ENCODE measurements at regions of chr22 and their contacts with region 1.

Region 1: GRCh38 chr22:30289134-30289979 is at the start of gene CASTOR1:
- DNase-seq: peak; percentile 78 to 97 (median 84)
- ATAC-seq: peak; percentile 89
- H3K4me3 ChIP-seq: peak within 1 kb of the TSS; percentile 80
- H3K4me3 Mint-ChIP-seq: peak within 1 kb of the TSS; percentile 87 to 93 (median 90)
- H3K27ac ChIP-seq: peak within 1 kb of the TSS; percentile 75
- H3K27ac Mint-ChIP-seq: peak within 1 kb of the TSS; percentile 85 to 96 (median 92)
- H3K4me1 ChIP-seq: peaks cover 25 to 27% of the 10 kb centered on the region in 2 donors
- H3K4me1 Mint-ChIP-seq: peaks cover 12 to 55% (median 39%) of the 10 kb centered on the region in 7 donors
- H3K27me3 ChIP-seq: no peaks in the 10 kb centered on the region
- H3K27me3 Mint-ChIP-seq: no peaks in the 10 kb centered on the region
- total RNA-seq, gene CASTOR1: 12.4 to 21.3 (median 17.9) TPM

Region 2: DNA sequence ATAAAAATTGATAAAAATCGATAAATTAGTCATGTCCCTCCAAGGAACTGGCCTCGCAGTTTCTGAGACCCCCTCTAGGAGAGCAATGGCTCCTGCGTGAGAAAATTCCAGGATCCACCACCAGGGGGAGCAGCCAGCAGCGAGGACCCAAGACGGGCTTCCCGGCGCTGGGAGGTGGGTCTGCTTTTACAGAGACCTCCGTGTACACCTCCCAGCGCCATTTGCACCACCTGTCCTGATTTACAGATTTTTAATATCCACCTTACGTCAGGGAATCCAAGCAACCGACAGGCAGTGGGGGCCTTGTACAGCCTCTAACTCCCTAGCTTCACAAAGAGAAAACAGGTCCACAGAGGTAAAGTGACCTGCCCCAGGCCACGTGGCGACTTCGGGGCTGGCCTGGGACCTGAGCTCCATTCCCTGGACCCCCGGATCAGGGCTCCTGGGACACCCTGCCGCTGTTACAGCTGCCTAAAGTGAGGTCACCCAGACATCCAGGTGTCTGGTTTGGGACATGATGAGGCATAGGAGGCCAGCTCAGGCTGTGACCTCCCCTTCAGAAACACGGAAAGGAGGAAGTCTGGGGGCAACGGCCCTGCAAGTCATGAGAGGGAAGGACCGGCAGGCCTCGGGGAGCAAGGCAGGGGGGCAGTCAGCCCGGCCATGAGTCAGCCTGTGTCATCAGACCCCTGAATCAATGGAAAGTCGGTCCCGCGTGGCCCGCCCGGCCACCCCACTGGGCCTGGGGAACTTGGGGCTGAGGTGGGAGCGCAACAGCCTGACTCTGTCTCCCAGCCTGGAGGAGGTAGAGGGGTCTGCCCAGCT is 26.2 kb before region 1 on chr22:
- CTCF ChIA-PET with region 1: interaction called, 85 read pairs
- POLR2A ChIA-PET with region 1: interaction called, 18 read pairs
- intact Hi-C with region 1: loop called (anchors 1 kb)
- DNase-seq: peak; percentile 58 to 87 (median 70)
- ATAC-seq: peak; percentile 28
- H3K4me3 ChIP-seq: no peak overlapping the region
- H3K4me3 Mint-ChIP-seq: peak overlapping the region; percentile 32 to 94 (median 48)
- H3K27ac ChIP-seq: no peak overlapping the region
- H3K27ac Mint-ChIP-seq: peak overlapping the region in 8 of 9 donors; percentile 7 to 87 (median 68)
- H3K4me1 ChIP-seq: peaks cover 27 to 38% of the 10 kb centered on the region in 2 donors
- H3K4me1 Mint-ChIP-seq: peaks cover 21 to 57% (median 39%) of the 10 kb centered on the region in 7 donors
- H3K27me3 ChIP-seq: no peaks in the 10 kb centered on the region
- H3K27me3 Mint-ChIP-seq: no peaks in the 10 kb centered on the region

Region 3: DNA sequence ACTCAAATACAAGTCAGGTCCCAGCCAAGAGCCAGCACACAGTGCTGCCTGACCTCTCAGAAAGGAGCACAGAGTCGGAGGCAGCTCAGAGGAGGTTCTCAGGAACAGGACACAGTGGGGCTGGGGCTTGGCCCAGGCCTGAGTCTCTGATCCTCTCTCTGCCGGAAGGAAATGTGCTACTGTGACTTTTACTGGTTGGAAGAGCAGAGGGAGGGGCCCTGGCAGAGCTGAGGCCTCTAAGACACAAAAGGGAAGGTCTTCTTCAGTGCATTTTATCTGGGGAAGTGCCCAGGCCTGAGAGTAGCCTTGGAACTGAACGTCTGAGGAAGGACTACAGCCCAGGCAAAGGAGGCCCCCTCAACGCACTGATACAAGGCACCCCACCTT is 16.2 kb after region 1 on chr22:
- CTCF ChIA-PET with region 1: interaction called, 74 read pairs
- POLR2A ChIA-PET with region 1: interaction called, 1,265 read pairs
- intact Hi-C with region 1: loop called (anchors 1 kb)
- DNase-seq: peak in 8 of 9 donors; percentile 56 to 75 (median 68)
- ATAC-seq: peak; percentile 67
- H3K4me3 ChIP-seq: peak overlapping the region; percentile 51
- H3K4me3 Mint-ChIP-seq: peak overlapping the region; percentile 69 to 97 (median 84)
- H3K27ac ChIP-seq: peak overlapping the region; percentile 75
- H3K27ac Mint-ChIP-seq: peak overlapping the region; percentile 87 to 99 (median 97)
- H3K4me1 ChIP-seq: peaks cover 96 to 98% of the 10 kb centered on the region in 2 donors
- H3K4me1 Mint-ChIP-seq: peaks cover 82 to 100% (median 93%) of the 10 kb centered on the region in 7 donors
- H3K27me3 ChIP-seq: no peaks in the 10 kb centered on the region
- H3K27me3 Mint-ChIP-seq: no peaks in the 10 kb centered on the region

Region 4: DNA sequence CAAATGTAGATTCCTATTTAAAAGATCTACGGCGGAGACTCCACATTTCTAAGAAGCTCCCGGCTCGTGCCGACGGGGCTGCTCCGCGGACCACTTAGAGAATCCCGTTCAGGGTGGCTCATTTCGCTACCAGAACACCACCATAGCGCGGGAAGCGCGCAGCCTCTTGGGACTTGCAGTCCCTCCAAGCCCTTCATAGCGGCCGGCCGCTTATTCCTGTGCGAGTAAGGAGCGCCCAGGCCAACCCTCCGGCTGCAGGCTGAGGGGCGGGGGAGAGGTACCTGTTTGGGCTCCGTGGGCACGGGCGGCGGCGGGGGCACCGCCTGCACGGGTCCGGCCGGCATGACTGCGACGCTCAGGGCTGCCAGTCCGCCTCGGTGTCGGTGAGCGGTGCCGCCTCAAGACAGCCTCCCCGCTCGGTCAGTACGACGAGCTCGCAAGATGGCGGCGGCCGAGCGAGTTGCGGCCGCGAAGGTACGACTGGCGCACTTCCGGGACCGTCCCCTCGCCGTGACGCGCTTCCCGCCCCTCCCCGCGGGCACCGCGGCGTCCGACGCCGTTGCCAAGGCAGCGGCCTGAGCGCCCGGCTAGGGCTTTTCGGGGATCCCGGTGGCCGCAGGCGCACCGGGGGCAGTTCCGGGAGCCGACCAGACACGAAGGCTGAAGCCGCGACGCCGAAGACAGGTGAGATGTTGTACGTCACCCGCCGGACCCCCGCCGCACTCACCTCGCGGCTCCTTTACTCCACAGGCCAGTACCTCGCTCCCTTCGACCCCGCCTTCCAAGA is 67.3 kb after region 1 on chr22 and contains the starts of genes CCDC157 and SF3A1:
- CTCF ChIA-PET with region 1: interaction called, 18 read pairs
- POLR2A ChIA-PET with region 1: interaction called, 87 read pairs
- intact Hi-C with region 1: loop called (anchors 1 kb)
- DNase-seq: peak; percentile 78 to 90 (median 86)
- ATAC-seq: peak; percentile 94
- H3K4me3 ChIP-seq: peak within 1 kb of the TSS; percentile 94
- H3K4me3 Mint-ChIP-seq: peak within 1 kb of the TSS; percentile 92 to 99 (median 95)
- H3K27ac ChIP-seq: peak within 1 kb of the TSS; percentile 100
- H3K27ac Mint-ChIP-seq: peak within 1 kb of the TSS; percentile 86 to 99 (median 95)
- H3K4me1 ChIP-seq: peaks cover 32 to 37% of the 10 kb centered on the region in 2 donors
- H3K4me1 Mint-ChIP-seq: peaks cover 35 to 62% (median 54%) of the 10 kb centered on the region in 7 donors
- H3K27me3 ChIP-seq: no peaks in the 10 kb centered on the region
- H3K27me3 Mint-ChIP-seq: peaks cover 0 to 6% (median 0%) of the 10 kb centered on the region in 5 donors
- total RNA-seq, gene CCDC157: 1.8 to 6.9 (median 3.2) TPM
- total RNA-seq, gene SF3A1: 267 to 341 (median 284) TPM

Region 5: GRCh38 chr22:30381264-30381663 is 91.9 kb after region 1 on chr22:
- CTCF ChIA-PET with region 1: interaction called, 157 read pairs
- POLR2A ChIA-PET with region 1: interaction called, 84 read pairs
- intact Hi-C with region 1: no loop called
- DNase-seq: no peak
- ATAC-seq: no peak
- H3K4me3 ChIP-seq: no peak overlapping the region
- H3K4me3 Mint-ChIP-seq: no peak overlapping the region
- H3K27ac ChIP-seq: no peak overlapping the region
- H3K27ac Mint-ChIP-seq: peak overlapping the region in 1 of 9 donors; percentile 12
- H3K4me1 ChIP-seq: no peaks in the 10 kb centered on the region
- H3K4me1 Mint-ChIP-seq: peaks cover 2 to 7% (median 3%) of the 10 kb centered on the region in 7 donors
- H3K27me3 ChIP-seq: no peaks in the 10 kb centered on the region
- H3K27me3 Mint-ChIP-seq: no peaks in the 10 kb centered on the region

Region 6: GRCh38 chr22:30396871-30397655 is 107.7 kb after region 1 on chr22 and contains the start of gene SEC14L2:
- CTCF ChIA-PET with region 1: interaction called, 157 read pairs
- POLR2A ChIA-PET with region 1: interaction called, 84 read pairs
- intact Hi-C with region 1: no loop called
- DNase-seq: peak; percentile 26 to 73 (median 50)
- ATAC-seq: peak; percentile 81
- H3K4me3 ChIP-seq: peak within 1 kb of the TSS; percentile 71
- H3K4me3 Mint-ChIP-seq: peak within 1 kb of the TSS; percentile 85 to 95 (median 90)
- H3K27ac ChIP-seq: peak within 1 kb of the TSS; percentile 77
- H3K27ac Mint-ChIP-seq: peak within 1 kb of the TSS; percentile 77 to 94 (median 91)
- H3K4me1 ChIP-seq: peaks cover 12 to 22% of the 10 kb centered on the region in 2 donors
- H3K4me1 Mint-ChIP-seq: peaks cover 29 to 69% (median 46%) of the 10 kb centered on the region in 7 donors
- H3K27me3 ChIP-seq: no peaks in the 10 kb centered on the region
- H3K27me3 Mint-ChIP-seq: peaks cover 0 to 5% (median 0%) of the 10 kb centered on the region in 5 donors
- total RNA-seq, gene SEC14L2: 10.7 to 147 (median 16.5) TPM

Region 7: GRCh38 chr22:30485362-30485988 is 196.1 kb after region 1 on chr22:
- CTCF ChIA-PET with region 1: interaction called, 5 read pairs
- POLR2A ChIA-PET with region 1: no interaction called
- intact Hi-C with region 1: loop called (anchors 1 to 2 kb)
- DNase-seq: peak; percentile 61 to 84 (median 70)
- ATAC-seq: peak; percentile 98
- H3K4me3 ChIP-seq: no peak overlapping the region
- H3K4me3 Mint-ChIP-seq: no peak overlapping the region
- H3K27ac ChIP-seq: no peak overlapping the region
- H3K27ac Mint-ChIP-seq: peak overlapping the region in 3 of 9 donors; percentile 2 to 45 (median 9)
- H3K4me1 ChIP-seq: no peaks in the 10 kb centered on the region
- H3K4me1 Mint-ChIP-seq: peaks cover 0 to 2% (median 0%) of the 10 kb centered on the region in 7 donors
- H3K27me3 ChIP-seq: no peaks in the 10 kb centered on the region
- H3K27me3 Mint-ChIP-seq: peaks cover 0 to 4% (median 0%) of the 10 kb centered on the region in 5 donors

Measured in naive thymus-derived CD4-positive, alpha-beta T cell (primary cell).